Activated naive CD4-positive, alpha-beta T cell treated with anti-CD3 and anti-CD28 coated beads, Interleukin-2, amount 10 ng/mL, durations not matched to agents 7 days and 5 days (primary cell): ENCODE measurements at regions of chr10 and their contacts with region 1.

Region 1: DNA sequence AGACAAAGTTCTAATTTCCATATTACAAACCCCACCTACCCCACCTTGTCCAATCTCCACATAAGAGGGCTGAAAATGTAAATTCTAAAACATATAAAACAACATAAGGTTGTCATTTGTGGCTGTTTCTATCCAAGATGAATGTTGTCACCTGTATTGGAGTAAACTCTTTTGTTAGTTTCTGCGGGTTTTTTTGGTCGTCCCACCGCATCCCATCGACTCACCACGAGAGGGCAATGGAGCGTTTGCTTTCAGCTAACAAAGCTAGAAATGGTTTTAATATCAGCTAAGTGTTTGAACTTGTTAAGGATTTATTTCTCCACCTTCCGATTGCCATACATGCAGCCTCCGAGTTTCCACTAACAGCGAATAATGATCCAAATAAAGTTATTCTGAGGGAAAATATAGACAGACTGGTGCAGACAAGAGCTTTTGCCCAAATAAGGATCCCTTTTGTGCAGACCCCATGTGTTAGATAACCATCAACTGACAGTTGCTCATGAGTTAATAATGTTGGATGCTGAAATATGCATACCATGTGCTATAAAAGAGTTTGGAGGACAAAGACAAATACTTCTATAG is 137.2 kb downstream of the ARID5B start:
- DNase-seq: peak; percentile 87
- H3K4me3 Mint-ChIP-seq: peak overlapping the region; percentile 13
- H3K27ac Mint-ChIP-seq: peak overlapping the region; percentile 87
- H3K4me1 Mint-ChIP-seq: peaks cover 84% of the 10 kb centered on the region
- H3K27me3 Mint-ChIP-seq: no peaks in the 10 kb centered on the region

Region 2: DNA sequence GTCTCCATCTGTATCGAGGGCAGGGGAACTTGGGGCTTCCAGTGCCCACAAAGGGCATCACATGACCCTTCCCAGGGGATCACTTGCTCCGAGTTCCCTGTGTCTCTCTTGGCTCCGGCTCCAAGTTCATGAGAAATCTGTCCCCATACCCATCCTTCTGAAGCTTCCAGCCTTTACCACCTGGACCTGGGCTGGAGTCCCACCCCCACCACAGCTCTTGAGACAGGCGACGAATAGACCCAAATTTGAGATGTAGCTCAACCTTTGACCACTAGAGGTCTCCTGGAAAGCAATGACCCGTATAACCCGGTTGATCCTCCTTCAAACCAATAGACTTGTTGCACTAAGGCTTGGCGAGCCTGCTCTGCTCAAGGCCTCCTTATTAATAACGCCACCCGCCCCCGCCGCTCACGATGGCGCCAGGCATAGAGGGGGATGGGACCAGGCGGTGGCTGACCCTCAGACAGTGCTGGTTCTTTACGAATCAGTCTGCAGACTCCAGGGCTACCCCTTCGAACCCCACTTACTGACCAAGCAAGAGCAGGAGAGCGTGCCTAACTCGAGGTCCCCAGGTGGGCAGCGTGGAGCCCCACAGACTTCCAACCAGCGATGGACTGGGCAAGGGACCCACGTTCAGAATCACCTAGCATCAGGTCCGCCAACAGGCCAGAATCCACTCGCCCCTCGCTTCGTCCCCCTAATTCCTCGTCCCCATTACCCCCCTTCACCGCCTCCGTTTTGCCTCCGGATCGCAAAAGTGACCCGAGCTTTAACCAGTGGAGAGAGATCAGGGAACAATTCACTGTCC is 141.6 kb before region 1 on chr10:
- CTCF ChIA-PET with region 1: interaction called, 22 read pairs
- DNase-seq: peak; percentile 69
- H3K4me3 Mint-ChIP-seq: peak overlapping the region; percentile 81
- H3K27ac Mint-ChIP-seq: peak overlapping the region; percentile 94
- H3K4me1 Mint-ChIP-seq: peaks cover 35% of the 10 kb centered on the region
- H3K27me3 Mint-ChIP-seq: no peaks in the 10 kb centered on the region

Region 3: DNA sequence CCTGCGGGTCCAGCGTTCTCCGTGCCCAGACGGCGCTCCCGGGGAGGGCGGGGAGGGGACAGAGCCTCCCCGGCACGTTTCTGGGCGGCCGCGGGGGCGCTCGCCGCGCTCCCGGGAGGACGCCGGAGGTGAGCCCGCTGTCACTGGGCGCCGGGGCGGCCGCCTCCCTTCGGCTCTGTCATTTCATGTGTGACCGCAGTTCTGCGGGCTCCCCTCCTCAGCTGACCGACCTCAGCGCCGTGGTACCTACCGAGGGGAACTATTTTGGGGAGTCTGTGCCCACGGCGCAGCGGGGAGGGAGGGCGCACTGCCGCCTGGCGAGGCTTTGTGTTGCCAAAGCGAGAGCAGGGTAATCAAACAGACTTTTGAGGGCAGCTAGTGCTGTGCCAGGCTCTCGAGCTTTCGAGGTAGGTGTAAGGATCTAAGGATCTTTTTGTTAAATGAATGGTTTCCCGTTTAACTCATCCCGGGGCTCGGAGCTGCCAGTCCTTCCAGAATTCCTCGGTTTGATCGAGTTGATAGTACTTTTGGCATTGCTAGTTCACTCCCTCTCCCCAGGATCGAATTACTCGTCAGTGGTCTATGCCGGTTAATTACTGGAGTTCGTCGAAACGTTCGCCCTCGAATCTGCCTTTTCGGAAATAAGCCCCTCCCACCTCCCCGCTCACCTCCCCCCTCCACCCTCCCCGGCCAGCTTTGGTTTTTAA is 135.3 kb before region 1 on chr10:
- CTCF ChIA-PET with region 1: interaction called, 13 read pairs
- DNase-seq: peak; percentile 81
- H3K4me3 Mint-ChIP-seq: peak overlapping the region; percentile 94
- H3K27ac Mint-ChIP-seq: peak overlapping the region; percentile 99
- H3K4me1 Mint-ChIP-seq: peaks cover 55% of the 10 kb centered on the region
- H3K27me3 Mint-ChIP-seq: no peaks in the 10 kb centered on the region

Region 4: GRCh38 chr10:61943674-61944410 is 94.9 kb before region 1 on chr10:
- CTCF ChIA-PET with region 1: interaction called, 10 read pairs
- DNase-seq: no peak
- H3K4me3 Mint-ChIP-seq: peak overlapping the region; percentile 71
- H3K27ac Mint-ChIP-seq: peak overlapping the region; percentile 94
- H3K4me1 Mint-ChIP-seq: peaks cover 60% of the 10 kb centered on the region
- H3K27me3 Mint-ChIP-seq: no peaks in the 10 kb centered on the region

Region 5: DNA sequence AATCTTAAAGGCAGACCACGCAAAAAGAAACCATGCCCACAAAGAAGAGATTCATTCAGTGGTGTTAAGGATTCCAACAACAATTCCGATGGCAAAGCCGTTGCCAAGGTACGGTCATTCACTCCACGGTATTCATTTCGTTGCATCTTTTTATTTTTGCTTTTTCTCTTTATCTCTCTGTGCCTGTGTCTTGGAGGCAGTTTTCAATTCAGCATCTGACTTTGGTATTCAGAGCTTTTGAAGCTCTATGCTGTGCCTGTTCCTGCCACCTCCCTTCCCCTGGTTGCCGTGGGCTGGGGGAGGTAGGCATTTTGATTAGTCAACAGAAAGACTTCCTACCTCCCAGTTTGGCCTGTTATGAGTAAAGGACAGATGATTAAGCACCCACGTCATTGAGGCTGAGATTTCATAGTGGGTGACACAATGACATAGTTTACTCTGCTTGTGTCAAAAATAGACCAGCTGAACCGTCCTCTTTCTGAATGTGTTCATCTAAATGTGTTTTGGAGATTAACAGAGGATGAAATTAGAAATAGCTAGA is 12.3 kb after region 1 on chr10:
- CTCF ChIA-PET with region 1: interaction called, 43 read pairs
- DNase-seq: peak; percentile 86
- H3K4me3 Mint-ChIP-seq: peak overlapping the region; percentile 94
- H3K27ac Mint-ChIP-seq: peak overlapping the region; percentile 100
- H3K4me1 Mint-ChIP-seq: peaks cover 98% of the 10 kb centered on the region
- H3K27me3 Mint-ChIP-seq: no peaks in the 10 kb centered on the region